Activated T-helper 1 cell treated with anti-CD3 and anti-CD28 coated beads, Interleukin-12 subunit alpha, Interleukin-12 subunit beta, Interleukin-2, Interleukin-4 antibody, amounts not matched to agents 30 ng/mL and 10 ng/mL and 1 ng/mL, durations not matched to agents 14 hours and 24 hours and 36 hours (primary cell): ENCODE measurements at regions of chr1 and their contacts with region 1.

Region 1: DNA sequence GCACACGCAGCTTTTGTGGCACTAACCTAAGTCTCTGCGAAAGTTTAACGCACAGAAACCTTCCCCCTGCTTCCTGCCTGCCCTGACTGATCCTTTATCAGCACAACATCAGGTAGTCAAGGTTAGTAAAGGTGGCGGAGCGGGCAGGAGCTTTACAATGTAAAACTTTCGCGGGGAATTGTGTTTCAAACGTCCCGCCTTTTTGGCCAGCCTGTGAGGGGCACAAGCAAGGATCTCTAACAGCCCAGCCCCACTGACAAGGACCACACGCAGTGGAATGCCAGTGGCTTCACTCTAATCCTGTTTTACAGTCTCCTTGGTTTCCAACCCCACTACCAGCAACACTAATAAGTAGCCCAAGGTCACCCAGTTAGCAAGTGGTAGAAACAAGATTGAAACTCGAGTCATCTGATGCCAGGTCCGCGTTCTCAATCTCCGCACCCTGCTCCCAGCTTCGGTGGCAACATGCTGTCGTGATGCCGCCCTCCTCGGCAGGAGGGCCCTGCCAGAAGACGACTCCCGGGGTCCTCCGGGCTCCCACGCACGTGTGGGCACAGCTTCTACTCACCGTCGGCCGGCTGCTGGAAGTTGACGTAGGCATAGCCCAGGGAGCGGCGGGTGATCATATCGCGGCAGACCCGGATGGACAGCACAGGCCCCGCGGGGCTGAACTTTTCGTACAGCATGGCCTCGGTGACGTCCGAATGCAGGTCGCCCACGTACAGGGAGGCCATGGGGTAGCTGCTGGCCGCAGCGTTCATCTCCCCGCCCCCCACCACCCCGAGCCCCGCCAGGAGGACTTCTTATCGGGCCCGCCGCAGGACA is 1.2 kb downstream of the PABPC4 start:
- DNase-seq: peak; percentile 33
- H3K4me3 Mint-ChIP-seq: peak overlapping the region; percentile 93
- H3K27ac Mint-ChIP-seq: peak overlapping the region; percentile 85
- H3K4me1 Mint-ChIP-seq: peaks cover 49% of the 10 kb centered on the region
- H3K27me3 Mint-ChIP-seq: no peaks in the 10 kb centered on the region

Region 2: GRCh38 chr1:39189592-39190041 is 385.8 kb before region 1 on chr1:
- intact Hi-C with region 1: loop called (anchors 5 kb)
- DNase-seq: no peak
- H3K4me3 Mint-ChIP-seq: peak overlapping the region; percentile 37
- H3K27ac Mint-ChIP-seq: peak overlapping the region; percentile 95
- H3K4me1 Mint-ChIP-seq: peaks cover 87% of the 10 kb centered on the region
- H3K27me3 Mint-ChIP-seq: no peaks in the 10 kb centered on the region

Region 3: DNA sequence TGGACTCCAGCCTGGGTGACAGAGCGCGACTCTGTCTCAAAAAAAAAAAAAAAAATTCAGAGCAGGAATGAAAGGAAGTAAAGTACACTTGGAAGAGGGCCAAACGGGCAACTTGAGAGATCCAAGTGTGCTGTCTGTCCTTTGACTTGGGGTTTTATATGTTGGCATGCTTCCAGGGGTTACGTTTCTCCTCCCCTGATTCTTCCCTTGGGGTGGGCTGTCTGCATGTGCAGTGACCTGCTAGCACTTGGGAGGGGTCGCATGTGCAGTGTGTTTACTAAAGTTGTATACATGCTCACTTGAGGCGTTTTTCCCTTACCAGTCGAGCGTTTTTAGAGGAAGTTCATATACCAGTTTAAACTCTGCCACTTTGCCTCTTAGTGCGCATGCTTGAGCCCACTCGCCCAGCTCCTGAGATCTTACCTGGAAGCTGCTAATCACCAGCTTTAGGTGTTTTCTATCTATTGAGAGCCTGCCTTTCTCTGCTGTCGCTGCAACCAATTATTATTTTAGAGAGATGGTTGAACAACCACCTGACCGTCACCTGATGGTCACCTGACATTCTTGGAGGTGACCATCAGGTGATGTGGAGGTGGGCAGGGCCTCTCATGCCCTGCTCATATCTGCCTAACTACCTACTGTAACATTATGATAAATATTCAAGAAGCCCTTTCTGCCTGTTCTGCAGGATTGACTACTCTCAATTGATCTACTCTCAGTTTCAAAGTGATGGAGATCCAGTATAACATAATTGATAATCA is 230.8 kb before region 1 on chr1:
- intact Hi-C with region 1: no loop called
- DNase-seq: no peak
- H3K4me3 Mint-ChIP-seq: no peak overlapping the region
- H3K27ac Mint-ChIP-seq: peak overlapping the region; percentile 11
- H3K4me1 Mint-ChIP-seq: no peaks in the 10 kb centered on the region
- H3K27me3 Mint-ChIP-seq: no peaks in the 10 kb centered on the region

Region 4: DNA sequence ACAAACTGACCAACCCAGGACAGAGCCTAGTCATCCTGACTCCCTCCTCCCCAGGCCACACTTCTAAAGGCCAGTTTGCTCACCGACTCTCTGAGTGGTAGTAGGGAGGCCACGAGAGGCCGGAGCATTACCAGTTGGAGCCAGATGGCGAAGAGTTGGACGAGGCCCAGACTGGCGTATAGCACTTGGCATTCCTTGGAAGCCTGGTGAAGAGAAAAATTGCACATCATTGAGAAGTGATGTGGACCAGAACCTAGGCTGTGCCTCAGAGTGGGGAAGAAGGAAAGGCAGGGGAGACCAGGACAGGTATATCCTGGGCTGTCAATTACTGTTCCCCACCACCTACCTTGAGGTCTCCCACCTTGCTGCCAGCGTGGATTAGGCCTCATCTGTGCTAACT is 11.1 kb before region 1 on chr1:
- intact Hi-C with region 1: loop called (anchors 2 kb)
- DNase-seq: no peak
- H3K4me3 Mint-ChIP-seq: no peak overlapping the region
- H3K27ac Mint-ChIP-seq: no peak overlapping the region
- H3K4me1 Mint-ChIP-seq: peaks cover 12% of the 10 kb centered on the region
- H3K27me3 Mint-ChIP-seq: no peaks in the 10 kb centered on the region

Region 5: DNA sequence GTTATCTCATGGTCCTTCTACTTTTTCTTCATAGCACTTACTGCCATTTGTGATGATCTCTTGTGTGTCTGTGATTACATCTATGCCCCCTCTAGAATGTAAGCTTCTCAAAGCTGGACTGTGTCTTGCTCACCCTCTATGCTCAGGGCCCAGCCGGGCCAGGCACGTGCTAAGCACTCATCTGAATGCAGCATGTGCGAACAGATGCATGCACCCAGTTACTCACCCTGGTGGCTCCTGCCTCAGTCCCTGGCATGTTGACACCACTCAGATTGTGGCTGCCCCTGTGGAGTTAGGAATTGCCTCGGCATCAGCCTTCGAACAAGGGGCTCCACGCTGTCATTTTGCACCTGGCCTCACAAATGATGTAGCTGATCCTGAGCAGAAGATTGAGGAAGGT is 20.8 kb after region 1 on chr1:
- intact Hi-C with region 1: loop called (anchors 2 kb)
- DNase-seq: no peak
- H3K4me3 Mint-ChIP-seq: no peak overlapping the region
- H3K27ac Mint-ChIP-seq: no peak overlapping the region
- H3K4me1 Mint-ChIP-seq: peaks cover 15% of the 10 kb centered on the region
- H3K27me3 Mint-ChIP-seq: peaks cover 2% of the 10 kb centered on the region

Region 6: DNA sequence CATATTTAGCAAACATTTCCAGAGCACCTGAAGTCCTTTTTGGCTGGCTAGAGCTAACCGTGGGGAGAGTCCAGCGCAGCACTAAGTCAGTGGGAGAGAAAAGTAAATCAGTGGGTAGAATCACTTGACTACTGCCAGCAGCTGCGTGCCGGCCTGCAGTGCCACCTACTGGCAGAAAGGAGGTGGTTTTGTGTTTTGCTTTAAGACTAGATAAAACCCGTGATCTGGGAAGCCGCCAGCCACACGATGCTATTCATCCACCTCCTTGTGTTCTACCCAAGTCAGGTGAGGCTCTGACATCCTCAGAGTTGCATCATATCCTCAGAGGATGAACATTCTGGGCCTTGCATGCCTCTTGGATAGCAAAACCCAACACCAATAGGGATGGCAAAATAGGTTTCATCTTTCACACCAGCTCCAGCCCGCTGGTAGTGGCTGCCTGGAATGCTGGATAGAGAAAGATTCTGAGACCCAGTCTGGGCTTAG is 78.2 kb after region 1 on chr1:
- intact Hi-C with region 1: loop called (anchors 1 kb)
- DNase-seq: peak; percentile 67
- H3K4me3 Mint-ChIP-seq: no peak overlapping the region
- H3K27ac Mint-ChIP-seq: no peak overlapping the region
- H3K4me1 Mint-ChIP-seq: peaks cover 21% of the 10 kb centered on the region
- H3K27me3 Mint-ChIP-seq: peaks cover 3% of the 10 kb centered on the region

Region 7: GRCh38 chr1:39738622-39739366 is 163.4 kb after region 1 on chr1 and contains the start of gene PPIE:
- intact Hi-C with region 1: loop called (anchors 1 kb)
- DNase-seq: peak; percentile 83
- H3K4me3 Mint-ChIP-seq: peak within 1 kb of the TSS; percentile 96
- H3K27ac Mint-ChIP-seq: peak within 1 kb of the TSS; percentile 93
- H3K4me1 Mint-ChIP-seq: peaks cover 67% of the 10 kb centered on the region
- H3K27me3 Mint-ChIP-seq: no peaks in the 10 kb centered on the region
- total RNA-seq, gene PPIE: 68.1 and 75.0 TPM in 2 replicates

Region 8: GRCh38 chr1:39940252-39940651 is 364.8 kb after region 1 on chr1:
- intact Hi-C with region 1: no loop called
- DNase-seq: no peak
- H3K4me3 Mint-ChIP-seq: no peak overlapping the region
- H3K27ac Mint-ChIP-seq: no peak overlapping the region
- H3K4me1 Mint-ChIP-seq: peaks cover 15% of the 10 kb centered on the region
- H3K27me3 Mint-ChIP-seq: peaks cover 2% of the 10 kb centered on the region